ENCODE measurements at regions of chr21 and their contacts with region 1.

Region 1: GRCh38 chr21:42973991-42974831 is at the start of gene PKNOX1:
- DNase-seq: peak; percentile 99 to 100 (median 99)
- ATAC-seq: peak; percentile 94 to 96 (median 96)
- H3K4me3 ChIP-seq: peak within 1 kb of the TSS; percentile 47 to 98 (median 82)
- H3K27ac ChIP-seq: peak within 1 kb of the TSS; percentile 94 to 100 (median 98)
- H3K4me1 ChIP-seq: peaks cover 0 to 36% (median 14%) of the 10 kb centered on the region in 12 donors
- H3K27me3 ChIP-seq: no peaks in the 10 kb centered on the region
- CTCF ChIP-seq: no peak
- POLR2A ChIP-seq: peak; percentile 37 to 68
- total RNA-seq, gene PKNOX1: 3.5 to 13.6 (median 8.7) TPM

Region 2: GRCh38 chr21:42892931-42893755 is 81.1 kb before region 1 on chr21 and contains the start of gene NDUFV3:
- intact Hi-C with region 1: loop called in 4 of 10 experiments (anchors 5 to 10 kb)
- DNase-seq: peak; percentile 100
- ATAC-seq: peak; percentile 98 to 100 (median 98)
- H3K4me3 ChIP-seq: peak within 1 kb of the TSS; percentile 68 to 98 (median 88)
- H3K27ac ChIP-seq: peak within 1 kb of the TSS; percentile 90 to 99 (median 96)
- H3K4me1 ChIP-seq: peaks cover 0 to 22% (median 13%) of the 10 kb centered on the region in 12 donors
- H3K27me3 ChIP-seq: no peaks in the 10 kb centered on the region
- CTCF ChIP-seq: peak in 6 of 12 donors; percentile 6 to 38 (median 18)
- POLR2A ChIP-seq: peak; percentile 58 to 97
- total RNA-seq, gene NDUFV3: 35.1 to 62.8 (median 50.4) TPM

Region 3: DNA sequence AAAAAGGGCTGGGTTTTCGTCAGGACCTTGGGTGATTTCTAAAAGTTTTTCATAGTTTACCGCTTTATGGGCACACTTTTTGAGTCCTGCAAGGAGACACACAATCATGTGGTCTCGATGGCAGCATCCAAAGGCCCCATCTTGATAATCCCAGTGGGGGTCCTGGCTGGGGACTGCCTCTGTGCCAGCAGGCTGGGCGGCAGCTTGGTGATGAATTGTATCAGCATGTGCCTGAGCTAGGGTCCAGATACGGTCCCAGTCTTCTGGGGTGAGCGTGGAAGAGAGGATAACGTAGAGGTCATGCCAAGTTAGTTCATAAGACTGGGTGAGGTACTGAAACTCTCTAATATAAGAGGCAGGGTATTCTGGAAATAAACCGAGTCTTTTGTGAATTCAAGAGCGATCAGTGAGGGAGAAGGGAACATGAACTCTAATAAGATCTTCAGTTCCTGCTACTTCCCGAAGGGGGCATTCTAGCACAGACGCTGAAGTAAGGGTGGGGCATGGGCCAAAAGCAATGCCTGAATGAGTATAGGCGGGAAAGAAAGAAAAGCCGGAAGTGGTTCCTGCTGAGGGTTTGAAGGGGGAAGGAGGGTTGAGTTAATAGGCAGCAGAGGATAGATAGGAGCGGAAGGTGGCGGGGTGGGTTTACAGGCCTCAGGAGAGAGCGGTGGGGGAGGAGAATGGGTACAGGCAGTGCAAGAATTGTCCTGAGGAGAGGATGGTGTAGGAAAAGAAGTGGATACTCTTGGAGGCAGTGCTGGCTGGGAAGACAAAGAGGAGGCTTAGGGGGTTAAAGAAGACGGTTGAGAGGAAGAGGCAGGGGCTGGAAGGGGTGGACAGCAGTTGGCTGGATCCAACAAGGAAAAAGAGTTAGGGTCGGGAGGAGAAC is 50.4 kb before region 1 on chr21:
- intact Hi-C with region 1: loop called in 1 of 10 experiments (anchors 10 kb)
- DNase-seq: peak in 4 of 5 donors; percentile 59 to 71 (median 66)
- ATAC-seq: peak in 3 of 4 donors; percentile 85 to 93 (median 88)
- H3K4me3 ChIP-seq: peak overlapping the region in 3 of 12 donors; percentile 1 to 35 (median 18)
- H3K27ac ChIP-seq: no peak overlapping the region
- H3K4me1 ChIP-seq: peaks cover 0 to 11% (median 5%) of the 10 kb centered on the region in 12 donors
- H3K27me3 ChIP-seq: no peaks in the 10 kb centered on the region
- CTCF ChIP-seq: peak; percentile 61 to 85 (median 74)
- POLR2A ChIP-seq: no peak

Region 4: DNA sequence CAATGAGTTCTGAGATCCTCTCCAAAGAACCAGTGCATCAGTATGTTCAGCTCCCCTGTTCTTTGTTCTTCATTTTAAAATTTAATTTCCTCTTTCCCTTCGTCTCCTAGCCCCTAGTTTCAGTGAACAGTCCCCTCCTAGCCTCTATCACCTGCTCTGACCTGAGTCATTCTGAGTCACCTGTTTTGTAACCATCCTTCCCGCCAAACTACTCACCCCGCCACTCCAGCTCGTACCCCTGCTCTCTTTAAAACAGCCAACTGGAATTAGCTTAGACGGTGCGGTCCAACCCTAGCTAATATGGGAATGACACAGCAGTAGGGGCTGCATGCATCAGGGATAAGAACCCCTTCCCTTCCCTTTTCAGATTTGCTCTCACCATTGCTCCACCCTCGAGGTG is 32.0 kb before region 1 on chr21:
- intact Hi-C with region 1: loop called in 1 of 10 experiments (anchors 2 kb)
- DNase-seq: no peak
- ATAC-seq: no peak
- H3K4me3 ChIP-seq: no peak overlapping the region
- H3K27ac ChIP-seq: no peak overlapping the region
- H3K4me1 ChIP-seq: peaks cover 0 to 14% (median 2%) of the 10 kb centered on the region in 12 donors
- H3K27me3 ChIP-seq: no peaks in the 10 kb centered on the region
- CTCF ChIP-seq: no peak
- POLR2A ChIP-seq: no peak

Measured in heart left ventricle (tissue), 16 donors.